A549 (cell line): ENCODE measurements at regions of chr2 and their contacts with region 1.

Region 1: DNA sequence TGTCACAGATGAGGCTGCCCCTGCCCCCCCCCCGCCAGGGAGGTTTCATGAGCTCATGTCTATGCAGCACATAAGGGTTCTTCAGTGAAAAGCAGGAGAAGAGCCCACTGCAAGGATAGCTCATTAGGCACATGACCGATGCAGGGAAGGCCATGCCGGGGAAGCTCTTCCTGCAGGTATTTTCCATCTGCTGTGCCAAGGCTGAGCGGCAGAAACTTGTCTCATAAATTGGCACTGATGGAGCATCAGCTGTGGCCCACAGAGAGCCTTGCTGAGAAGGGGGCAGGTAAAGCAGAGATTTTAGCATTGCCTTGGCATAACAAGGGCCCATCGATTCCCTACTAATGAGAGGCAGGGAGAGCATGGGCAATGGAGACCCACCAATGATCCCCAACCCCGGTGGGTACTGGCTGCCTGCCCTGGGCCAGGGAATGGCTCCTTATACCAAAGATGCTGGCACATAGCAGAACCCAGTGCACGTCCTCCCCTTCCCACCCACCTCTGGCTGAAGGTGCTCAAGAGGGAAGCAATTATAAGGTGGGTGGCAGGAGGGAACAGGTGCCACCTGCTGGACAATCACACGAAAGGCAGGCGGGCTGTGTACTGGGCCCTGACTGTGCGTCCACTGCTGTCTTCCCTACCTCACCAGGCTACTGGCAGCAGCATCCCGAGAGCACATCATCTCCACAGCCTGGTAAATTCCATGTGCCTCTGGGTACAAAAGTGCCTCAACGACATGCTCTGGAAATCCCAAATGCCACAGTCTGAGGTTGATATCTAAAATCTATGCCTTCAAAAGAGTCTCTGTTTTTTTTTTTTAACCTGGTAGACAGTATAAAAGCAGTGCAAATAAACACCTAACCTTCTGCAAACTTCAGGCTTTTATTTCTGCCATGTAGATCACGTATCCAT is 41.4 kb downstream of the STEAP3 start:
- DNase-seq: peak; percentile 49 to 60
- ATAC-seq: peak; percentile 95 to 99
- H3K4me3 ChIP-seq: no peak overlapping the region
- H3K27ac ChIP-seq: no peak overlapping the region
- H3K4me1 ChIP-seq: no peaks in the 10 kb centered on the region
- CTCF ChIP-seq: peak; percentile 84
- EP300 ChIP-seq: no peak
- POLR2A ChIP-seq: no peak
- RAD21 ChIP-seq: peak; percentile 85 to 86

Region 2: GRCh38 chr2:119011162-119011909 is 253.7 kb before region 1 on chr2:
- CTCF ChIA-PET with region 1: interaction called, 32 read pairs
- POLR2A ChIA-PET with region 1: no interaction called
- DNase-seq: peak; percentile 49 to 51
- ATAC-seq: peak; percentile 95 to 98
- H3K4me3 ChIP-seq: 0 out of 3 replicates have a peak overlapping the region, but pooled peaks have one; percentile 27
- H3K27ac ChIP-seq: 0 out of 6 replicates have a peak overlapping the region, but pooled peaks of 1 of the 2 experiments have one; percentile 48
- H3K4me1 ChIP-seq: no peaks in the 10 kb centered on the region
- CTCF ChIP-seq: peak; percentile 68
- EP300 ChIP-seq: no peak
- POLR2A ChIP-seq: no peak
- RAD21 ChIP-seq: peak; percentile 72 to 87

Region 3: GRCh38 chr2:119174216-119175037 is 90.6 kb before region 1 on chr2:
- CTCF ChIA-PET with region 1: interaction called, 10 read pairs
- POLR2A ChIA-PET with region 1: no interaction called
- DNase-seq: peak; percentile 41 to 58
- ATAC-seq: peak; percentile 79 to 96; a peak in 5 of 6 replicates
- H3K4me3 ChIP-seq: no peak overlapping the region
- H3K27ac ChIP-seq: no peak overlapping the region
- H3K4me1 ChIP-seq: 0 out of 3 replicates have a peak, but pooled peaks cover 2% of the 10 kb centered on the region
- CTCF ChIP-seq: peak; percentile 65
- EP300 ChIP-seq: no peak
- POLR2A ChIP-seq: no peak
- RAD21 ChIP-seq: peak; percentile 52 to 53; a peak in 3 of 5 replicates

Region 4: DNA sequence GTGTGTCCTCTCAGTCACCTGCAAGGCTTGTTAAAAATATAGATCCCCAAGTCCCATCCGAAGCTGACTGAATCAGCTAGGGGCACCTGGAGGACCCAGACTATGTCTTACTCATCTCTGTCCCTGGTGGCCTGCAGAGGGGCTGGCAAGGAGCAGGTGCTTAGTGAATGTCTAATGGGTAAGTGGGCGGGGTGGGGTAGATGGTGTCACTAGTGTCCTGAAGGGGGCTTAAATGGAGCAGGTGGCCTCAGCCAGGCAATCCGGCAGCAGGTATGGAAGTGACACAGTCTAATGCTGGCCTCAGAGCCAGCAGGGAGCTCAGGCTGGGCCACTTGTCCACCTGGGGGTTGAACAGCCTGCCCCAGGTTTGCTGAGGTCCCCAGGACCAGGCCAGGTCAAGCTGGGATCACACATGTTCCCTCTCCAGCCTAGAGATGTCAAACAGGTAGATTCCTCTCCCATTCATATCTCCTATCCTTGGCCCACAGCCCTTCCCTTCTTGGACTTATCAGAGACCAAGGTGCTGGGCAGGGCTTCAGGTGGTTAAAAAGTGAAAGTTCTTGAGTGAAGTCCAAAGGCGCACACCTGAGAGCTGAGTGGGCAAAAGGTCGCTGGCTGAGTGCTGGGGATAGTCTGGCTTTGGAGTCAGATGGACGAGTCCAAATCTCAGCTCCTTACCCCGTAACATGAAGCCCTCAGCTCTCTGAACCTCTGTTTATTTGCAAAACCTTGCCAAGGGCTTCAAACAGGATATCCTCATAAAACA is 39.7 kb before region 1 on chr2:
- CTCF ChIA-PET with region 1: interaction called, 17 read pairs
- POLR2A ChIA-PET with region 1: no interaction called
- DNase-seq: peak in 1 of 2 experiments; percentile 52
- ATAC-seq: no peak; a peak in 1 of 6 replicates
- H3K4me3 ChIP-seq: no peak overlapping the region
- H3K27ac ChIP-seq: no peak overlapping the region
- H3K4me1 ChIP-seq: peaks cover 13% of the 10 kb centered on the region
- CTCF ChIP-seq: no peak
- EP300 ChIP-seq: no peak
- POLR2A ChIP-seq: no peak
- RAD21 ChIP-seq: no peak

Region 5: DNA sequence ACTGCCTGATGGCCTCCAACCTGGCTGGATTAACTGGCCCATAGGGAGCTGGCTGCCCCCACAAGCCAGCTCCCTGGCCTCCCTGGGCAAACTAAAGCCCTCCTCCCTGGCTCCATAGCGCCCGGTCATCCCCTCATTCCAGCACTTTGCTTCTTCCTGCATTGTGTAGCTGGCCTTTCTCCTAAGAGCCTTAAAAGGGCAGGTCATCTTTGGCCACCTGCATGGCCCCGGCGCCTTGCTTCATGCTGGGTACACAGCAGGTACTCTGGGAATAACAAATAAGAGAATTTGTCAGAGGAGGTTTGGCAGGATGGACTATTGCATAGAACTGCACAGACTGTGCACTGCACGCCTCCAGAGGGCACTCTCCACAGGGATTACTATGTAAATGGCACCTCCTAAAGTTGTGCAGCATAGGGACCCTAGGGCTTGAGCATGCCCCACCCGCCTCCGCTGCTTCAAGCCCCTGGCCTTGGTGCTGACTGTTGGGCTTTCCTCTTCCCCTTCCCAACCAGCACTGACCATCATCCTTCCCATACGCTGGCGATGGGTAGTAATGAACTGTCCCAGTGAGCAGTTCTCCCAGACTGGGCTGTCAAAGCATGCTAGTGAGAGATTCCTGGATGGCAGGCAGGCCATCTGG is 30.5 kb before region 1 on chr2:
- CTCF ChIA-PET with region 1: interaction called, 49 read pairs
- POLR2A ChIA-PET with region 1: no interaction called
- DNase-seq: peak in 1 of 2 experiments; percentile 35
- ATAC-seq: peak; percentile 87 to 96
- H3K4me3 ChIP-seq: no peak overlapping the region
- H3K27ac ChIP-seq: peak overlapping the region in 1 of 2 experiments; percentile 9; a peak in 1 of 6 replicates
- H3K4me1 ChIP-seq: peaks cover 8% of the 10 kb centered on the region
- CTCF ChIP-seq: peak; percentile 59
- EP300 ChIP-seq: no peak
- POLR2A ChIP-seq: no peak
- RAD21 ChIP-seq: peak; percentile 66 to 71

Region 6: GRCh38 chr2:119240311-119241202 is 24.5 kb before region 1 on chr2:
- CTCF ChIA-PET with region 1: interaction called, 49 read pairs
- POLR2A ChIA-PET with region 1: no interaction called
- DNase-seq: peak; percentile 29 to 43
- ATAC-seq: peak; percentile 86 to 89
- H3K4me3 ChIP-seq: no peak overlapping the region
- H3K27ac ChIP-seq: peak overlapping the region; percentile 78 to 85
- H3K4me1 ChIP-seq: peaks cover 20% of the 10 kb centered on the region
- CTCF ChIP-seq: no peak
- EP300 ChIP-seq: no peak
- POLR2A ChIP-seq: no peak
- RAD21 ChIP-seq: no peak

Region 7: GRCh38 chr2:119248311-119248710 is 16.7 kb before region 1 on chr2:
- CTCF ChIA-PET with region 1: interaction called, 38 read pairs
- POLR2A ChIA-PET with region 1: no interaction called
- DNase-seq: no peak
- ATAC-seq: no peak
- H3K4me3 ChIP-seq: no peak overlapping the region
- H3K27ac ChIP-seq: peak overlapping the region in 1 of 2 experiments; percentile 29; a peak in 1 of 6 replicates
- H3K4me1 ChIP-seq: peaks cover 27% of the 10 kb centered on the region
- CTCF ChIP-seq: no peak
- EP300 ChIP-seq: no peak
- POLR2A ChIP-seq: no peak
- RAD21 ChIP-seq: no peak